ENCODE measurements at regions of chr12 and their contacts with region 1.

Region 1: DNA sequence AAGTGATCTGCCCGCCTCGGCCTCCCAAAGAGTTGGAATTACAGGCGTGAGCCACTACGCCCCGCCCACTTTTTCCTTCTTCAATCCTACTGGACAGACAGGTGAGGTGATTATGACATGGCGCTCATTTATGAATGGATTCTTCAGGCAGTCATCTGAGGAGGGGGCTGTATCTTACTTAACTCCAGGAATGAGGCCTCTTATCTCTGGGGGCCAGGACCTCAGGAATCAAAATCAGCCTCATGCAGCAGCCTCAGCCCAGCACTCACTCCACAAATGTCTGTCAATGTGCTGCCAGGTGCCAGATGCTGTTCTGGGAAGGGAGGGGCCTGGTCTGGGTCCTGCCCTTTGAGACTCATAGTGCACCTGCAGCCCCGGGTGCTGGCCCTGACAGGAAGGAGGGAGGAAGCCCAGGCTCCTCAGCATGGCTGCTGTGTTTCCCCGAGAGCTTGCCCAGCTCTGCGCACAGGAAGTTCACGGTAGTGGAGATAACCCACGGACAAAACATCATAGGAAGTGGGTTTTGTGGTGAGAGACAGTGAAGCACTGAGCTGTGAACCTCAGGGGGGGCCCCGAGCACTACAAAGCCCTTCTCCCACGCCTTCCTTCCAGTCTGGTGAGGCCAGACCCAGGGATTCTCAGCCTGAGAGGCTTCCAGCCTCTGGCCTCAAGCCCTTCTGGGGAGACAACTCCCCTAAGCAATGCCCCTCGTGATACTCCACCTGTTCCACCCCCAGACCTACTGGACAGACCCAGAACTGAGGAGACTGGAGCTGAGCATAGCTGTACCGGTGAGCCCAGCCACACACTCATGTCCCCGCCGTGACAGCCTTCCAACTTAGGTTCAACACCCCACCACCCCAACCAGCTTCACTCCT is 22.3 kb downstream of the GALNT6 start:
- DNase-seq: peak; percentile 69 to 96 (median 92)
- ATAC-seq: peak; percentile 93 to 94
- H3K4me3 Mint-ChIP-seq: peak overlapping the region; percentile 59 to 91 (median 69)
- H3K27ac Mint-ChIP-seq: peak overlapping the region; percentile 79 to 99 (median 92)
- H3K4me1 Mint-ChIP-seq: peaks cover 27 to 63% (median 59%) of the 10 kb centered on the region in 4 donors
- H3K27me3 Mint-ChIP-seq: peaks cover 0 to 4% (median 0%) of the 10 kb centered on the region in 5 donors

Region 2: GRCh38 chr12:51320695-51321320 is 48.1 kb before region 1 on chr12:
- POLR2A ChIA-PET with region 1: interaction called, 12 read pairs
- DNase-seq: no peak
- ATAC-seq: no peak
- H3K4me3 Mint-ChIP-seq: peak overlapping the region; percentile 74 to 99 (median 97)
- H3K27ac Mint-ChIP-seq: peak overlapping the region; percentile 91 to 100 (median 97)
- H3K4me1 Mint-ChIP-seq: peaks cover 41 to 93% (median 84%) of the 10 kb centered on the region in 4 donors
- H3K27me3 Mint-ChIP-seq: no peaks in the 10 kb centered on the region

Region 3: DNA sequence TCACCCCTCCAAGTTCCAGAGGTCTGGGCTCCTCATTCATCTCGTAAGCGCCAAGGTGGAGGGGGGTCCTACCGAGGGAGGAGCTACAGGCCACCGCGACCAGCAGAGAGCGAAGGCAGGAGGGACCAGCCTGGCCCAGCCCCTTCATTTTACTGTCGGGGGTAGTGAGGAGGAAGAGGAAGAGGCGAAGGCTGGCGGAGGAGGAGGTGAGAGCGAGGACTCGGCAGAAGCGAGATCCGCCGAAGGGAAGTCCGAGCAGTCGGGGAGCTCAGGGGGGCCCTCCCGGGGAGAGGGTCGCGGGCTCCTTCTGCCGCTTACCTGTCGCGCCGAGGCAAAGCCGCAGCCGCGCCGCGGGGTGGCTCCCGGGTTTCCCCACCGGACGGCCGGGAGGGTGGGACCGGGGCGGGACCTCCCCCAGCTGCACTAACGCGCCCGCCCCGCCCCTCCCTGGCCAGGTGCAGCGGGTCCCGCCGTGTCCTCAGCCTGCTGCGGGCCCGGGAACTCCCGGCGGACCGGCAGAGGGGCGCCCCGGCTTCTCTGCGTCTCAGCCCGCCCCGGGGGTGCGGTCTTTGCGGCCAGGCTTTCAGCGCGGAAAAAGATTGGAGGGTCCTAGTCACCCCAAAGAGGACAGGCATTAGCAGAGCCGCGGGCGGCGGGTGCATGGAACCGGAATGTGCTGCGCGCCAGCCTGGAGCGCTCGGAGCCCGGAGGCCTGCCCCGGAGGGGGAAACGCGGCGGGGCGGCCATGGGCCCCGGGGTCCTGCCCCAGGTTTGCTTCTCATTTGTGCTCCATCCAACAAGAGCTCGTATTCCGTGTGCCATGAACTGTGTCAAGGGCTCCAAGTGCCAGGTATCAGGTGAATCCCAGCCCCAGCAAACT is 22.6 kb after region 1 on chr12 and contains the start of gene GALNT6:
- POLR2A ChIA-PET with region 1: interaction called, 12 read pairs
- DNase-seq: peak; percentile 52 to 78 (median 66)
- ATAC-seq: peak; percentile 71 to 75
- H3K4me3 Mint-ChIP-seq: peak within 1 kb of the TSS; percentile 88 to 95 (median 92)
- H3K27ac Mint-ChIP-seq: peak within 1 kb of the TSS; percentile 78 to 95 (median 90)
- H3K4me1 Mint-ChIP-seq: peaks cover 49 to 85% (median 81%) of the 10 kb centered on the region in 4 donors
- H3K27me3 Mint-ChIP-seq: no peaks in the 10 kb centered on the region
- polyA plus RNA-seq, gene GALNT6: 4.4 to 8.3 (median 4.6) TPM